Posterior vena cava (tissue), 2 donors: ENCODE measurements at regions of chr5 and their contacts with region 1.

Region 1: GRCh38 chr5:173399851-173400250 is 71.6 kb upstream of the STC2 start:
- DNase-seq: no peak

Region 2: GRCh38 chr5:173245319-173246134 is 154.3 kb before region 1 on chr5:
- intact Hi-C with region 1: loop called in 1 of 2 experiments (anchors 5 kb)
- DNase-seq: no peak